ENCODE measurements at regions of chr14 and their contacts with region 1.

Region 1: DNA sequence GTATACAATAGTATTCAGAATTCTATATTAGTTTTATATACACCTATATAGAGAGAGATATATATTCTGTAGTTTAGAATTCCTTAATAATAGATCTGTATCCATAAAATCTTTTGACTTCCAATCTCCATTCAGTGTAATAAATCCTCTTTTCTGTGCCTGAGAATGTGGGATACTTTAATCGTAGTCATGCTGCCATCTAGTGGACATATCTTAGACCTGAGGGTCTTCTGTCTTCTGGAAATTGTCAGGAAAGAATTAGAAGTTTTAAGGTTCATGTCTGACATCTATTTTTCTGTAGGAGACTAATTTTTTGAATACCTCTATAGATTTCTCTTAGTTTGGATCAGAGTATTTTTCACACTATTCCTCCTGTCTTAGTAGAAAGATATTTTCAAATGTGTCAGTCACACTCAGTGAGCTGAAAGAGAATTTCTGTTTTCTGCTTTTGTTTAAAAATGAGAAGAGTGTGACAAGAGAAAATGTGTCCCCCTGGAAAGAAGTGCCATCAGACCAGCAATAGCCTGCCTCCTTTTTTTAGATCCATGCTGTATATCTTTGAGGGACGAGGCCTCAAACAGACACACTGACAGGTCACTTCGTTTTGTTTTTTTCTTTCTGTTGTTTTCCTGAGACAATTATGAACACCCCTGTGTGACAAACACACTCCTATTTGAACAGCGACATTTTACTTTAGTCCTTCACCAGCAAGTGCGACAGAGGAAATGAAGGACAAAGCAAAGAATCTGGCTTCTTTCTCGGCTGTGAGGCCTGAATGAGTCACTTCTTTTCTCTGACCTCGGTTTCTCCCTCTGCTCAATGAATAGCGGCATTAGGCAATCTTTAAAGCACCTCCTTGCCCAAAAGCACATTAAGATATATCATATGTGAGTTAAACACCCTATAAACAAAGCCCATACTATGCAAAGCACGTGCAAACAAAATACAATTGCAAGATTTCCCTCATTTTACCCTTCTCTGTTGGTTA is 96.3 kb downstream of the GALC start:
- DNase-seq: no peak
- ATAC-seq: peak in 1 of 2 donors; percentile 51
- H3K4me3 ChIP-seq: no peak overlapping the region
- H3K27ac ChIP-seq: no peak overlapping the region
- H3K4me1 ChIP-seq: no peaks in the 10 kb centered on the region
- H3K27me3 ChIP-seq: no peaks in the 10 kb centered on the region

Region 2: GRCh38 chr14:87745507-87746118 is 151.1 kb before region 1 on chr14:
- intact Hi-C with region 1: loop called in 2 of 4 experiments (anchors 5 to 10 kb)
- DNase-seq: peak in 2 of 3 donors; percentile 28 to 43
- ATAC-seq: peak in 1 of 2 donors; percentile 59
- H3K4me3 ChIP-seq: no peak overlapping the region
- H3K27ac ChIP-seq: no peak overlapping the region
- H3K4me1 ChIP-seq: no peaks in the 10 kb centered on the region
- H3K27me3 ChIP-seq: no peaks in the 10 kb centered on the region

Region 3: GRCh38 chr14:87805315-87805723 is 91.4 kb before region 1 on chr14:
- intact Hi-C with region 1: loop called in 2 of 4 experiments (anchors 5 kb)
- DNase-seq: peak; percentile 24 to 55 (median 50)
- ATAC-seq: peak; percentile 38 to 45
- H3K4me3 ChIP-seq: no peak overlapping the region
- H3K27ac ChIP-seq: no peak overlapping the region
- H3K4me1 ChIP-seq: no peaks in the 10 kb centered on the region
- H3K27me3 ChIP-seq: no peaks in the 10 kb centered on the region